Right ventricle myocardium inferior (tissue), 1 donor: ENCODE measurements at regions of chr1 and their contacts with region 1.

Region 1: GRCh38 chr1:208245185-208245705 is 1.1 kb upstream of the PLXNA2 start:
- DNase-seq: peak; percentile 91
- ATAC-seq: peak; percentile 83

Region 2: GRCh38 chr1:207981976-207982375 is 263.3 kb before region 1 on chr1:
- intact Hi-C with region 1: no loop called
- DNase-seq: no peak
- ATAC-seq: no peak

Region 3: GRCh38 chr1:208025031-208025430 is 220.2 kb before region 1 on chr1:
- intact Hi-C with region 1: loop called (anchors 2 kb)
- DNase-seq: no peak
- ATAC-seq: no peak

Region 4: GRCh38 chr1:208093754-208094719 is 151.2 kb before region 1 on chr1:
- intact Hi-C with region 1: loop called (anchors 2 kb)
- DNase-seq: peak; percentile 85
- ATAC-seq: no peak

Region 5: DNA sequence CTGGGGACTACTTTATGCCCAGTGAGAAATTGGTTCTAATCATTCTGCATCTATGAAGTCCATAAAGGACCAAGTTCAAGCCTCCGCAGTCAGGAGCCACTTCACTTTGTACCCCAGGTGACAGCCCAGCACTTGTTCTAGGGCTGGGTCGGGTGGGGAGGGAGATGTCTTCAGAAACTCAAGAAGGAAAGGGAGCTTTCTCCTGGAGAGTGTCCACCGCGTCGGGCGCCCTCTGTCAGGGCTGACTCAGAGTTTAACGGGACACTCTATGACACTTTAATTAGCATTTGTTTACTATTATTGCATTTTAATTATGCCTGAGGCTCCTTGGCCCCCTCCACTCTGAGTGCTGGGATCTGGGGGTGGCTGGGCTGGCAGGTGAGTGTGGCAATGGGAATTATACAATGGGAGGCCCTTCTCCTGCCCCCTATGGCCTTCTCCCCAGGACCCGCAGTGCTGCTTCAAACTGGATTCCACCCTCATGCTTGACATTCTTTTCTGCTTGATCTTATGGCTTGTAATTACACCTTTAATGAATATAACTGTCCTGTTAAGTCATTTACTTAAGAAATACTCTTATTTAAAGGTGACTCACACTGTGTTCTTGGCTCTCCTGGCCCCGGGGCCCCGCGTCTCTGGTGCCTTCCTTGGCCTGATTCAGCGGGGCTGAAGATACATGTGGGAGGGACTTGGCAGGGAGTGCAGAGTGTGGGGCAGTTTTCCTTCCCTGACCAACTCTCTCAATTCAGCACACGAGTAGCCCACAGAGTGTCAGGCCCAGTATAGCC is 137.6 kb before region 1 on chr1:
- intact Hi-C with region 1: no loop called
- DNase-seq: no peak
- ATAC-seq: no peak

Region 6: GRCh38 chr1:208149776-208150514 is 95.3 kb before region 1 on chr1:
- intact Hi-C with region 1: loop called (anchors 5 kb)
- DNase-seq: no peak
- ATAC-seq: peak; percentile 70